Sigmoid colon (tissue), 7 donors: ENCODE measurements at regions of chr21 and their contacts with region 1.

Region 1: DNA sequence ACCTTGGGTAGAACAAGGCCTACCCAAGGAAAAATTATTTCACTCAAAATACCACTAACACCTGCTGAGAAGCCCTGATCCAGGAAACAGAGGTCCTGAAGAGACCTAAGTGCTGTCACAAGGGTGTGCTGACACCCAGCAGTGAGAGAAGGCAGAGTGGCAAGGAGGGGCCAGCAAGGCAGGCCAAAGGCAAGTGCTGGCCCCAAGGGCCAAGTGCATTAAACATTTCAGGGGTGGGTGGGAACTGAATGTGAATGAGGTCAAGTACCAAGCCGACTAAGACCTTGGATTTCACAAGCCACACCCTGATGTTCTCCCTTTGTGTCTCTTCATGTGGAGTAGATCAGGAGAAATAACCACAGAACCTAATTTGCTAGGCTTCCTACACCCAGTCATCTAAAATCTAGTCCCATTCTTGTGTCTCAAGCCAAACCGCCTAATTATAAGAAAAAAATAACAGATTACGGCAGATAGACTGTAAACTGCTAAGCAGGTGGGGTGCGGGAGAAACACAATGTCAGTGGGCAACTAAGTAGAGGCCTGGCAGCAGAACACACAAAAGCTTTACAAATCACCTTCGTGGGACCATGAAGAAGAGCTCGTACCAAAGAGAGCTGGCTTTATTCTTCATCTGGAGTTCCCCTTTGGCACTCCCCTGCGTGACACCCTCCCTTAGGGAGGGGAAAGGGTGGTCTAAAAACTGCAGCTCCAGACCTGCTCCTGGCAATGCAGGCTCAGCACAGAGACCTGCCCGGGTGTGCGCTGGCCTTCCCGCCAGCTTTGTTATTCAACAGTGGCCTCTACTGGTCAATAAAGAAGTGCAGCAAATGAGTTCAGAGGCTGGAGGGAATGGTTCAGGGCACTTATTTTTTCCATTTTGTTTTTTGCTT is 8.7 kb downstream of the UBE2G2 start:
- DNase-seq: no peak
- H3K4me3 ChIP-seq: no peak overlapping the region
- H3K27ac ChIP-seq: peak overlapping the region in 1 of 4 donors; percentile 34
- H3K4me1 ChIP-seq: peaks cover 0 to 31% (median 9%) of the 10 kb centered on the region in 4 donors
- H3K27me3 ChIP-seq: no peaks in the 10 kb centered on the region
- CTCF ChIP-seq: peak; percentile 41 to 78 (median 65)
- EP300 ChIP-seq: no peak
- POLR2A ChIP-seq: no peak

Region 2: GRCh38 chr21:44344541-44345328 is 448.2 kb before region 1 on chr21:
- intact Hi-C with region 1: loop called (anchors 5 kb)
- DNase-seq: no peak
- H3K4me3 ChIP-seq: no peak overlapping the region
- H3K27ac ChIP-seq: no peak overlapping the region
- H3K4me1 ChIP-seq: peaks cover 0 to 8% (median 6%) of the 10 kb centered on the region in 4 donors
- H3K27me3 ChIP-seq: peaks cover 7 to 41% (median 17%) of the 10 kb centered on the region in 3 donors
- CTCF ChIP-seq: no peak
- EP300 ChIP-seq: no peak
- POLR2A ChIP-seq: no peak

Region 3: GRCh38 chr21:44510508-44511210 is 282.3 kb before region 1 on chr21:
- intact Hi-C with region 1: loop called (anchors 1 kb)
- DNase-seq: no peak
- H3K4me3 ChIP-seq: no peak overlapping the region
- H3K27ac ChIP-seq: no peak overlapping the region
- H3K4me1 ChIP-seq: peaks cover 0 to 9% (median 3%) of the 10 kb centered on the region in 4 donors
- H3K27me3 ChIP-seq: peaks cover 3 to 42% (median 15%) of the 10 kb centered on the region in 3 donors
- CTCF ChIP-seq: peak; percentile 24 to 71 (median 55)
- EP300 ChIP-seq: no peak
- POLR2A ChIP-seq: no peak